HepG2 (cell line): ENCODE measurements at regions of chr10 and their contacts with region 1.

Region 1: DNA sequence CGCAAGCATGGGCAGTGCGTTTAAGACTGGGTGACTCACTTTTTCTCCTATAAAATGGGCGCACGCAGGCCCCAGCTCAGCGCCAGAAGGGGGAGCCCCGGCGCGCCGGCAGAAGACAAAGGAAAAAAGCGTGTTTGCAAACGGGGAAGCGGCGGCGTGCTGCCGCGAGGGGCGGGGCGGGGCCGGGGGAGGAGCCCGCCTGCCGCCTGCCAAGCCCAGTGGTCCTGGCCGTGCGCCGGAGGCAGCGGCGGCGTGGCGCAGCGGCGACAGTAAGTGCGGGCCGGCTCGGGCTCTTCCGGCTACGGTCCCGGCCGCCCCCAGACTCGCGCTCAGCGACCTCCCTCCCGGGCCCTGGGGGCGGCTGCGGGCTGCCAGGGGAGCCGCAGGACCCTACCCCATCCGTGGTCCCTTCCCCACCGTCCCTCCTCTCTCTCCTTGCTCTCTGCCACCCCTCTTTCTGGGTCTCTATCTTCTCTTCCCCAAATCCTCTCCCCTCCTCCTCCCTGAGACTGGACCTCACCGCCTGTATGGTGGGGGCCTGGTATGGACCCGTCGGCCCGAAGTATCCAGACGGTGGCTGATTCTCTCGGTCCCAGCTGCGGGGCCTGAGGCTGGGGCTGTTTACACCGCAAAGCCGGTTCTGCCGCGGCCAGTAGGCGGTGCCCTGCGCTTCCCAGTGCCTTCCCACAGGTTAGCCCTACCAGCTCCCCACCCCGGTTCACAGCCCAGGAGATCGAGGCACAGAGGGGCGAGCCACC is at the start of gene SLC29A3:
- DNase-seq: peak; percentile 71
- ATAC-seq: peak; percentile 95
- H3K4me3 ChIP-seq: peak within 1 kb of the TSS; percentile 77 to 87 (median 82)
- H3K27ac ChIP-seq: peak within 1 kb of the TSS; percentile 67
- H3K4me1 ChIP-seq: peaks cover 45% of the 10 kb centered on the region
- H3K27me3 ChIP-seq: peaks cover 0 to 12% of the 10 kb centered on the region in 2 experiments; a peak in 1 of 5 replicates
- CTCF ChIP-seq: peak; percentile 98
- EP300 ChIP-seq: no peak
- POLR2A ChIP-seq: peak in 1 of 2 experiments; percentile 74; a peak in 2 of 4 replicates
- RAD21 ChIP-seq: peak; percentile 95
- total RNA-seq, gene SLC29A3: 5.3 and 8.6 TPM in 2 replicates

Region 2: GRCh38 chr10:71234970-71235685 is 84.1 kb before region 1 on chr10:
- CTCF ChIA-PET with region 1: no interaction called
- POLR2A ChIA-PET with region 1: no interaction called
- in situ Hi-C with region 1: no loop called
- intact Hi-C with region 1: no loop called
- DNase-seq: no peak
- ATAC-seq: no peak
- H3K4me3 ChIP-seq: no peak overlapping the region
- H3K27ac ChIP-seq: no peak overlapping the region
- H3K4me1 ChIP-seq: no peaks in the 10 kb centered on the region
- H3K27me3 ChIP-seq: peaks cover 3 to 53% of the 10 kb centered on the region in 2 experiments; a peak in 3 of 5 replicates
- CTCF ChIP-seq: no peak
- EP300 ChIP-seq: no peak
- POLR2A ChIP-seq: no peak
- RAD21 ChIP-seq: no peak

Region 3: GRCh38 chr10:71299071-71299785 is 20.0 kb before region 1 on chr10:
- CTCF ChIA-PET with region 1: no interaction called
- POLR2A ChIA-PET with region 1: no interaction called
- in situ Hi-C with region 1: no loop called
- intact Hi-C with region 1: no loop called
- DNase-seq: no peak
- ATAC-seq: no peak
- H3K4me3 ChIP-seq: no peak overlapping the region
- H3K27ac ChIP-seq: no peak overlapping the region
- H3K4me1 ChIP-seq: no peaks in the 10 kb centered on the region
- H3K27me3 ChIP-seq: peaks cover 0 to 16% of the 10 kb centered on the region in 2 experiments; a peak in 3 of 5 replicates
- CTCF ChIP-seq: no peak
- EP300 ChIP-seq: no peak
- POLR2A ChIP-seq: no peak
- RAD21 ChIP-seq: no peak

Region 4: DNA sequence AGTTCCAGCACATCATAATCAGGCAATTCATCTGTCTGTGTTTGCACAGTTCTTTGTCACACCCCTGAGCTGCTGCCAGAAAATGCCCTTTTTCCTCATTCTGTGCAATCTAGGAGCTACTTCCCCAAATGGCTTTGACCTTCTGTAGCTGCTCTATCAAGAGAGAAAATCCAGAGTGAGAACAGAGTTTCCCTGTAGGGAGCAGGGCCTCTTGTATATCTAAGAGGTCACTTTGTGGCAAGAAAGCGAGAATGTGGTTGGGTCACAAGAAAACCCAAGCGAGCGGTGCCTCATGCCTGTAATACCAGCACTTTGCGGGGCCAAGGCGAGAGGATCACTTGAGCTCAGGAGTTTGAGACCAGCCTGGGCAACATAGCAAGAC is 24.2 kb after region 1 on chr10:
- CTCF ChIA-PET with region 1: interaction called, 5 read pairs
- POLR2A ChIA-PET with region 1: interaction called, 210 read pairs
- in situ Hi-C with region 1: no loop called
- intact Hi-C with region 1: no loop called
- DNase-seq: peak; percentile 74
- ATAC-seq: peak; percentile 7; the same call in 2 of the 3 replicates
- H3K4me3 ChIP-seq: no peak overlapping the region
- H3K27ac ChIP-seq: peak overlapping the region; percentile 92
- H3K4me1 ChIP-seq: peaks cover 100% of the 10 kb centered on the region
- H3K27me3 ChIP-seq: no peaks in the 10 kb centered on the region
- CTCF ChIP-seq: no peak
- EP300 ChIP-seq: no peak
- POLR2A ChIP-seq: no peak
- RAD21 ChIP-seq: no peak; the same call in 1 of the 2 replicates

Region 5: GRCh38 chr10:71372882-71373495 is 53.8 kb after region 1 on chr10:
- CTCF ChIA-PET with region 1: interaction called, 9 read pairs
- POLR2A ChIA-PET with region 1: interaction called, 38 read pairs
- in situ Hi-C with region 1: loop called (anchors 5 kb)
- intact Hi-C with region 1: loop called (anchors 1 kb)
- DNase-seq: no peak
- ATAC-seq: no peak
- H3K4me3 ChIP-seq: no peak overlapping the region
- H3K27ac ChIP-seq: no peak overlapping the region
- H3K4me1 ChIP-seq: peaks cover 39% of the 10 kb centered on the region
- H3K27me3 ChIP-seq: peaks cover 0 to 6% of the 10 kb centered on the region in 2 experiments; a peak in 1 of 5 replicates
- CTCF ChIP-seq: no peak
- EP300 ChIP-seq: no peak
- POLR2A ChIP-seq: no peak
- RAD21 ChIP-seq: no peak

Region 6: GRCh38 chr10:71431239-71432100 is 112.2 kb after region 1 on chr10:
- CTCF ChIA-PET with region 1: no interaction called
- POLR2A ChIA-PET with region 1: no interaction called
- in situ Hi-C with region 1: no loop called
- intact Hi-C with region 1: loop called (anchors 10 kb)
- DNase-seq: no peak
- ATAC-seq: peak; percentile 78
- H3K4me3 ChIP-seq: no peak overlapping the region
- H3K27ac ChIP-seq: no peak overlapping the region
- H3K4me1 ChIP-seq: no peaks in the 10 kb centered on the region
- H3K27me3 ChIP-seq: peaks cover 0 to 10% of the 10 kb centered on the region in 2 experiments; a peak in 3 of 5 replicates
- CTCF ChIP-seq: no peak
- EP300 ChIP-seq: no peak
- POLR2A ChIP-seq: no peak
- RAD21 ChIP-seq: no peak

Region 7: DNA sequence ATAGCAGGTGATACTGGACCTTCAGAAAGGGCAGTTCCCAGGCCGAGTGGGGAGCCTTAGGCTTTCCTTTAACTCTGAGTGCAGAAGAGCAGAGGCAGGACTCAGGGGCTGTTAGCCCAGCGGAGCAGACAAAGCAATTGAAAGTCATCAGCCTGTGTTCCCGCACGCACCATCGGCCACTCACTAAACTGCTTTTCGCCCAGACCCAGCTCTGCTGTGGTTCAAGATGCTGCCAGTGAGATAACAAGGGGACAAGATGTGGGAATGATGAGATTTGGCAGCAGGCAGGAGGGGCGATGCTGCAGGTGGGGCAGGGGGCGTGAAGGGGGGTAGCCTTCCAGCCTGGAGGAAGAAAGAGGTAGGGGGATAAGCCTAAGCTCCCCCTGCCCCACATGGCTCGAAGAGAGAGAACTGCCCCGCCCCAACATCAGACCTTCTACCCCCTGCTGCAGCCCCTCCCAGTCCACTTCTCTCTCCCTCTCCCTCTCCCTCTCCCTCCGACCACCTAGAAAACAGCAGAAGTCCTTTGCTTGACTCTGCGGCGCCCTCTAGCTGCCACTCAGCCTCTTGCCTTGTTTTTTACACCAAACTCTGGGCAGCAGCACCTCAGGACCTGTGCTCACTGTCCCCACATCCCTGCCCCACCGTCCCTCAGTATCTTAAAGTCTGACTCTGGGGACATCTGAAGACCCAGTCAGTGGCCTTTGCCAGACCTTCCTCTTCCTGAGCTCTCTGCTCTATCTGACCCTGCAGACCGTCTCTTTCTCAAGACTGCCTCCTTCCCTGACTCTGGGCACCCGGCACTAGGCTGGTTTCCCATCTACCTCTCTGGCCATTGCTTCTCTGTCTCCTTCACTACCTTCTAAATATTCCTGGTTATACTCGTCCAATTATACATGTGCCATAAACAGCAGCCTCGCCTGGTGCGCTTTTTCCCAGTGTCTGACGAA is 289.9 kb after region 1 on chr10:
- CTCF ChIA-PET with region 1: interaction called, 7 read pairs
- POLR2A ChIA-PET with region 1: no interaction called
- in situ Hi-C with region 1: loop called (anchors 10 kb)
- intact Hi-C with region 1: loop called (anchors 10 kb)
- DNase-seq: peak; percentile 54
- ATAC-seq: peak; percentile 82
- H3K4me3 ChIP-seq: no peak overlapping the region
- H3K27ac ChIP-seq: no peak overlapping the region
- H3K4me1 ChIP-seq: peaks cover 7% of the 10 kb centered on the region; the same call in 1 of the 2 replicates
- H3K27me3 ChIP-seq: peaks cover 0 to 7% of the 10 kb centered on the region in 2 experiments; a peak in 3 of 5 replicates
- CTCF ChIP-seq: peak; percentile 87
- EP300 ChIP-seq: no peak
- POLR2A ChIP-seq: no peak
- RAD21 ChIP-seq: peak; percentile 40